Activated CD4-positive, alpha-beta memory T cell treated with anti-CD3 and anti-CD28 coated beads for 36 hours (primary cell): ENCODE measurements at regions of chr11 and their contacts with region 1.

Region 1: GRCh38 chr11:727859-728748 is 19.2 kb upstream of the TALDO1 start:
- DNase-seq: peak; percentile 88
- H3K4me3 Mint-ChIP-seq: no peak overlapping the region
- H3K27ac Mint-ChIP-seq: no peak overlapping the region
- H3K4me1 Mint-ChIP-seq: peaks cover 18% of the 10 kb centered on the region
- H3K27me3 Mint-ChIP-seq: peaks cover 1% of the 10 kb centered on the region

Region 2: GRCh38 chr11:554824-555472 is 173.2 kb before region 1 on chr11:
- CTCF ChIA-PET with region 1: interaction called, 129 read pairs
- POLR2A ChIA-PET with region 1: no interaction called
- intact Hi-C with region 1: loop called (anchors 1 kb)
- DNase-seq: peak; percentile 82
- H3K4me3 Mint-ChIP-seq: peak overlapping the region; percentile 16
- H3K27ac Mint-ChIP-seq: no peak overlapping the region
- H3K4me1 Mint-ChIP-seq: peaks cover 7% of the 10 kb centered on the region
- H3K27me3 Mint-ChIP-seq: peaks cover 5% of the 10 kb centered on the region

Region 3: DNA sequence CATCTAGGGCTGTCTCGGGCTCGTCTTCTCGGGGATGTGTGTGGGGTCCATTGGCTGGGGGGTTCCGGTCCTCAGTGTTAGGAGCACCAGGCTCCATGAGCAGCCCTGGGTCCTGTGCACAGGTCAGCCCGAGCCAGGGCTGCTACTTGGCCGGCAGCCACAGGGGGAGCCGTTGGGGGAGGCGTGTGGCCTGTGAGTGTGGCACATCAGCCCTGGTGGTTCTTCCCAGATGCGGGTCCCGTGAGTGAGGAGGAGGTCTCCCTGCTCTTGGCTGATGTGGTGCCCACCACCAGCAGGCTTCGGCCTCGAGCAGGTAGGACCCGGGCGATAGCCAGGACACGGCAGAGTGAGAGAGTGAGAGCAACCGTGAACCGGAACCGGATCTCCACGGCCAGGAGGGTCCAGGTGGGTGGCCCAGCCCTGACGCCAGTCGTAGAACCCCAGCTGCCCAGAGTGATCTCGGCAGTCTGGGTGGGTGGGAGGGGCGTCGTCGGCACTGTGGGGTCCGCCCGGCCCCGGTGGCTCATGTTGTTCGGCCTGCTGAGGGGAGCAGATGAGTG is 130.9 kb before region 1 on chr11:
- CTCF ChIA-PET with region 1: no interaction called
- POLR2A ChIA-PET with region 1: no interaction called
- intact Hi-C with region 1: no loop called
- DNase-seq: no peak
- H3K4me3 Mint-ChIP-seq: no peak overlapping the region
- H3K27ac Mint-ChIP-seq: no peak overlapping the region
- H3K4me1 Mint-ChIP-seq: peaks cover 8% of the 10 kb centered on the region
- H3K27me3 Mint-ChIP-seq: no peaks in the 10 kb centered on the region

Region 4: DNA sequence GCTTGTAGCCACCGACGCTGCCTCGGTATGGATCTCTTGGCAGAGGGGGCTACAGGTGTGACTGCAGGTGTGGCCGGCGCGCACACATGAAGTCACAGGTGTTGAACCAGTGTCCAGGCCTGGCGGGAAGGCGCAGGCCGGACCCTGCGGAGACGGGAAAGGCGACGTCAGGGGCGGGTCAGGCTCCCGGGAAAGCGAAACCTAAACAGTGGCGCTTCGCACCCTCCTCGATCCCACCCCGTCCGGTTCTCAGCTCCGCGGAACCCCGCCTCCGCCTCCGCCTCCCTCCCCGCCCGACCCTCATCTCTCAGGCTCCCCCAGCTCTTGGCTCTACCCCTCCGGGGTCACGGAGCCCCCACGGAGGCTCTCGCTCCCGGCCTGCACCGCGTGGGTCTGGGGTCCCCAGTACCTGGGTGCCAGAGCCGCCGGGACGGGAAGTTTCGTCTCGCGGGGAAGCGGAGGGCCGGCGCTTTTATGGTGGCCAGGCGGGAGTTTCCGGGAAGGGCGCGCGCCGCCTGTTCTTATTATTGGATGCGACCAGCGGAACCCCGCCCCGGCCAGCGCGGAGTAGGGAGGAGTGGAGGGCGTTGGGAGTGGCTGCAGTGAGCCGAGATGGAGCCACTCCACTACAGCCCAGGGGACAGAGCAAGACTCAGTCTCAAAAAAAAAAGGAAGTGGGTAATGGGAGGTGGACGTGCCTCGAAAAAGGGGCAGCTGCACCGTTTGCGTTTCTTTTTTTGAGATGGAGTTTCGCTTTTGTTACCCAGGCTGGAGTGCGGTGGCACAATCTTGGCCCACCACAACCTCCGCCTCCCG is 112.4 kb before region 1 on chr11 and contains the start of gene IRF7:
- CTCF ChIA-PET with region 1: interaction called, 3 read pairs
- POLR2A ChIA-PET with region 1: no interaction called
- intact Hi-C with region 1: loop called (anchors 1 kb)
- DNase-seq: peak; percentile 94
- H3K4me3 Mint-ChIP-seq: peak within 1 kb of the TSS; percentile 92
- H3K27ac Mint-ChIP-seq: peak within 1 kb of the TSS; percentile 92
- H3K4me1 Mint-ChIP-seq: peaks cover 17% of the 10 kb centered on the region
- H3K27me3 Mint-ChIP-seq: no peaks in the 10 kb centered on the region
- total RNA-seq, gene IRF7: 79.9 to 80.7 TPM

Region 5: DNA sequence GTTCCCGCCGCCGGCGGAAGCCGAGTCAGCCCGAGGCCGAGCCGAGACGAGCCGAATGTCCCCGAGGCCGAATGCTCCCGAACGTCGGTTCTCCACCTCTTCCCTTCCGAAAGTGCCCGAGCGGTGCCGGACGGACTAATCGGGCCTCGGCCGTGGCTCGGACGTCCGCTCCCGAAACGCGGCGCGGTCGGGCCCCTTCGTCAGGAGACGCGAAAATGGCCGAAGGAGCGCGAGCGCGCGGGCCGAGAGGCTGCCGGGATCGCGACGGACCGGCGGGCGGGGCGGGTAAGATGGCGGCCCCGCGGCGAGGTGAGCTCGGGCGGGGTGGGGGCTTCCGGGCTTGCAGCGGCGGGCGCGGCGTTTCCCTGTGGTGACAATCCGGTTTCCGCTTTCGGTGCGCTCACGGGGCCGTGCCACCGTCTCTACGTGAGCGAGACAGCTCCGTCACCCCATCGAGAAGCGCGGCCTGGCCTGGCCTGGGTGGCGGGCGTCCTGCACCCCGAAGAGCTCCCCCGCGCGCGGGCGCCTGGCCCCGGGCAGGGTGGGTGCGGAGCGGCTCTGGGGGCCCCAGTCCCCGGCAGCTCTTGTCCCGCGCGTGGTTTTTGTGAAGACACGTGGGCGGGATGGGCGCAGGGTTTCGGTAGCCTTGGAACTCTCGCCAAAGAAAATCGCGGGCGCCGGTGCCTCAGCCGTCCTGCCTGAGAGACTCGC is 32.4 kb before region 1 on chr11 and contains the start of gene TMEM80:
- CTCF ChIA-PET with region 1: interaction called, 44 read pairs
- POLR2A ChIA-PET with region 1: interaction called, 13 read pairs
- intact Hi-C with region 1: loop called (anchors 1 kb)
- DNase-seq: peak; percentile 99
- H3K4me3 Mint-ChIP-seq: peak within 1 kb of the TSS; percentile 85
- H3K27ac Mint-ChIP-seq: peak within 1 kb of the TSS; percentile 93
- H3K4me1 Mint-ChIP-seq: peaks cover 49% of the 10 kb centered on the region
- H3K27me3 Mint-ChIP-seq: no peaks in the 10 kb centered on the region
- total RNA-seq, gene TMEM80: 9.5 to 9.8 TPM

Region 6: GRCh38 chr11:798093-798713 is 70.1 kb after region 1 on chr11 and contains the start of gene SLC25A22:
- CTCF ChIA-PET with region 1: no interaction called
- POLR2A ChIA-PET with region 1: no interaction called
- intact Hi-C with region 1: loop called (anchors 2 kb)
- DNase-seq: peak; percentile 88
- H3K4me3 Mint-ChIP-seq: peak within 1 kb of the TSS; percentile 81
- H3K27ac Mint-ChIP-seq: peak within 1 kb of the TSS; percentile 76
- H3K4me1 Mint-ChIP-seq: peaks cover 19% of the 10 kb centered on the region
- H3K27me3 Mint-ChIP-seq: no peaks in the 10 kb centered on the region
- total RNA-seq, gene SLC25A22: 28.4 to 32.2 TPM

Region 7: GRCh38 chr11:1157645-1158591 is 429.8 kb after region 1 on chr11 and contains the start of gene MUC5AC:
- CTCF ChIA-PET with region 1: no interaction called
- POLR2A ChIA-PET with region 1: no interaction called
- intact Hi-C with region 1: no loop called
- DNase-seq: peak; percentile 7
- H3K4me3 Mint-ChIP-seq: no peak within 1 kb of the TSS
- H3K27ac Mint-ChIP-seq: no peak within 1 kb of the TSS
- H3K4me1 Mint-ChIP-seq: no peaks in the 10 kb centered on the region
- H3K27me3 Mint-ChIP-seq: peaks cover 1% of the 10 kb centered on the region
- total RNA-seq, gene MUC5AC: not detected

Region 8: DNA sequence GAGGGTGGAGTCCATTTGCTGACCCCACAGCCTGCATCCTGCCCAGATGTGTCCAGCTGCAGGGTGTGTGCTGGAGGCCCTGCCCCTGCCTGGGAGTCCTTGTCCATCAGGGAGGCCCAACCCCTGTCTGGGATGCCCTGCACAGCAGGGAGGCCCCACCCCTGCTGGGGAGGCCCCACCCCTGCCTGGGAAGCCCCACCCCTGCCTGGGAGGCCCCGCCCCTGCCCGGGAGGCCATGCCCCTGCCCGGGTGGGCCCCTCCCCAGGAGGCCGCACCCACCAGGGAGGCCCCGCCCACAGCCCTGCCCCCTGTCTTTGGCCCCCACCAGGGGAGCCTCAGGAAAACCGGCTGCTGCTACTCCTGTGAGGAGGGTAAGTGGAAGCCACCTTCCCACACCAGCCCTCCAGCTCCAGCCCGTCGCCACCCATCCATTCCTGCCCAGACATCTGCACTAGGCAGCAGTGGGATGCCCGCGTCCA is 532.0 kb after region 1 on chr11:
- CTCF ChIA-PET with region 1: no interaction called
- POLR2A ChIA-PET with region 1: no interaction called
- intact Hi-C with region 1: no loop called
- DNase-seq: peak; percentile 70
- H3K4me3 Mint-ChIP-seq: no peak overlapping the region
- H3K27ac Mint-ChIP-seq: no peak overlapping the region
- H3K4me1 Mint-ChIP-seq: peaks cover 17% of the 10 kb centered on the region
- H3K27me3 Mint-ChIP-seq: no peaks in the 10 kb centered on the region